ENCODE measurements at regions of chr18 and their contacts with region 1.

Region 1: GRCh38 chr18:70506511-70506910 is 217.7 kb downstream of the SOCS6 start:
- DNase-seq: peak in 2 of 3 donors; percentile 9 to 50
- H3K4me3 ChIP-seq: no peak overlapping the region
- H3K27ac ChIP-seq: no peak overlapping the region
- H3K4me1 ChIP-seq: no peaks in the 10 kb centered on the region
- H3K27me3 ChIP-seq: no peaks in the 10 kb centered on the region

Region 2: DNA sequence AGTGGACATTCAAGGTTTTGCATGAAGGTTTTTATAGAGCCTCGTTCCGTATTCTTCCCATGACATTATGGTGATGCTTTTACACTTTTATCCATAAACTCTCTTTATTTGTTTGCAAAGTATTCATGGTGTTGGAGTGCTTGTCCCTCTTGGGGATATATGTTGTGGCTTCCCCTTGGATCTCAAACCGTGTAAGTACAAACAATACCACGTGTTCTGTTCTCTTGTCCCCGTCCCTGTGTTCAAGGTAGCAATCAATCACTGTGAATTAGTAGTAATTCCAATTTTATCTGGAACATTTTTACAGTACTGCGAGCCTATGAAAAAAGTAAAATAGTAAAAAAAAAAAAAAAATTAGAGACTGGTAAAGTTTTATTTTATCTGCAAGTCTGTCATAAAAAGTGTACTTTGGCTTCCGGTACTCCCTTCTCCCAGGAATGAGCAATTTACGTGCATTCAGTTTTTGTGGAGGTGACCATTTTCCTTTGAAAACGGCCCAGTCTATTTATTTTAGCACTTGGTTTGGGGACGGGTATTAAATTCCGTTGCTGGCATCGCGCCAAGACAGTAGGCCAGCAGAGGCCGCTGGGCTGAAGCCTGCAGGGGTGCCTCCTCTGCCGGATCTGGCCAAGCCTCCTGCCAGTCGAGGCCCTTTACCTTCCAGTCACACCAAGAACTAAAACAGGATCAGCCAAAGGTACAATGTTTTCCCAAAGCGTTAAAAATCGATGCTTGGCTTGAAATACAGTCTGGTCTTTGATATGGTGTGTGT is 42.0 kb before region 1 on chr18:
- CTCF ChIA-PET with region 1: no interaction called
- POLR2A ChIA-PET with region 1: no interaction called
- DNase-seq: peak; percentile 78 to 83 (median 80)
- H3K4me3 ChIP-seq: peak overlapping the region in 6 of 7 experiments; percentile 40 to 74 (median 61)
- H3K27ac ChIP-seq: no peak overlapping the region
- H3K4me1 ChIP-seq: peaks cover 4 to 10% (median 8%) of the 10 kb centered on the region in 4 experiments
- H3K27me3 ChIP-seq: no peaks in the 10 kb centered on the region

Region 3: DNA sequence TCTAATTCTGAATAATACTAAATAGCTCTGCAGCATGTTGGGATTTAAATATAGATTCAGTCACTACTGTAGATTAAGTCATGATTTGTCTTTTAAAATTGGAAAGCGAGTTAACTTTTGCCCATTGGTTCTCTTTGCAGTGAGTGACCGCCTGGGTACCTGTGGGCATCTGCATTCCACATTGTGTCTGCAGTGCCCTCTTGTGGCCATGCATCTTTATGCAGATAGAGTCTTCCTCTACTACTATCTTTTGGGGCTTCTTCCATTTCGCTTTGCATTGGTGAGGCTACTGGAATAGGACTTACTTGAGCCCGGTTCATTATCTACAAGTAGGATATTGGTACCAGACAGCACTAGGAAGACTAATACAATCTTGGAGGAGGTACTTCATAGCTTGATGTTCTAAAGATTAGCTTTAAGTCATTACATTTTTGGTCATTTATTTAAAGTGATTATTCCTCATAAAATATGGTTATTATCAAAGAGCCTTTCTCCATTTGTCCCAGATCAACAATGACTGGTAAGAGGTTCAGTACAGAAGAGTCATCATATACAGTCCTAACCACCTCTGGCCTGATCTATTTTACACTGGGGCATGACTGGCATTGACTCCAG is 14.7 kb before region 1 on chr18:
- CTCF ChIA-PET with region 1: interaction called, 10 read pairs
- POLR2A ChIA-PET with region 1: no interaction called
- DNase-seq: peak; percentile 35 to 55 (median 43)
- H3K4me3 ChIP-seq: no peak overlapping the region
- H3K27ac ChIP-seq: no peak overlapping the region
- H3K4me1 ChIP-seq: peaks cover 0 to 5% (median 0%) of the 10 kb centered on the region in 4 experiments
- H3K27me3 ChIP-seq: no peaks in the 10 kb centered on the region